MCF 10A (cell line): ENCODE measurements at regions of chrX and their contacts with region 1.

Region 1: GRCh38 chrX:16123222-16123786 is at the start of gene GRPR:
- DNase-seq: peak; percentile 88
- H3K4me3 Mint-ChIP-seq: no peak within 1 kb of the TSS
- H3K27ac Mint-ChIP-seq: no peak within 1 kb of the TSS
- H3K4me1 Mint-ChIP-seq: no peaks in the 10 kb centered on the region
- H3K27me3 Mint-ChIP-seq: peaks cover 69% of the 10 kb centered on the region
- CTCF ChIP-seq: peak; percentile 73
- total RNA-seq, gene GRPR: not detected in 2 replicates

Region 2: DNA sequence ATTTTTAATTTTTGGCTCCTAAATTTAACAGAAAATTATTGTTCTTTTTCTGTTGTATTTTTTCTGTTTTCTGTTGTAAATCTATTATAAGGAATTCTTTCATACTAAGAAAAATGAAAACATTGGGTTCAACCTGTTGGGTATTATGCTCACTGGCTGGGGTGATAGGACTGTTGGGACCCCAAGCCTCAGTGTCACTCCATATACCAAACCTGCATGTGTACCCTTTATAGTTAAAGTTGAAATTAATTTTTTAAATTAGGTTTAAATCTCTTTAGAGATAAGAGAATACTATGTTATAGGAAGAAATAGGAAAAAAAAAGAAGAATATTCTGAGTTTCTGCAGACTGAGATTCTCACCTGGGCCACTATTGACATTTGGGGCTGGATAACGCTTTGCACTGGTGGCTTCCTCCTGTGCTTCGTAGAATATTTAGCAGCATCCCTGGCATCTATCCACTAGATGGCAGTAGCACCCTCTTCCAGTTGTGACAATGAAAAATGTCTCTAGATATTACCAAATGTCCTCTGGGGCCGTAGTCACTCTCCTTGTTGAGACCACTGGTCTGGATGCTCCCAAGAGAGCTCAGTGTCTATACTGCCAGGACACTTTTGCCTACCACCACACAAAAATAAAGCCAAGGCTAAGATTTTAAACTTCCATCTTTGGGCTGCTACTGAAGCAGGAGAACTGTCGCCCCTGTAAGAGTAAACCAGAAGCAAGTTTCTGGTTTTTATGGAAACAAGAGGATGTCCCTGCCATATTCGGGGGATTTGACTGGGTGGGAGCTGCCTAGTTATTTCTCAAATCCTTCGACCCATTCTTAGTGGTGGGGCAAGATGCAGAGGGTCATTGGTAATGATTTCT is 436.3 kb before region 1 on chrX:
- CTCF ChIA-PET with region 1: no interaction called
- POLR2A ChIA-PET with region 1: no interaction called
- intact Hi-C with region 1: loop called (anchors 10 kb)
- DNase-seq: peak; percentile 78
- H3K4me3 Mint-ChIP-seq: no peak overlapping the region
- H3K27ac Mint-ChIP-seq: peak overlapping the region; percentile 39
- H3K4me1 Mint-ChIP-seq: no peaks in the 10 kb centered on the region
- H3K27me3 Mint-ChIP-seq: no peaks in the 10 kb centered on the region
- CTCF ChIP-seq: peak; percentile 71

Region 3: DNA sequence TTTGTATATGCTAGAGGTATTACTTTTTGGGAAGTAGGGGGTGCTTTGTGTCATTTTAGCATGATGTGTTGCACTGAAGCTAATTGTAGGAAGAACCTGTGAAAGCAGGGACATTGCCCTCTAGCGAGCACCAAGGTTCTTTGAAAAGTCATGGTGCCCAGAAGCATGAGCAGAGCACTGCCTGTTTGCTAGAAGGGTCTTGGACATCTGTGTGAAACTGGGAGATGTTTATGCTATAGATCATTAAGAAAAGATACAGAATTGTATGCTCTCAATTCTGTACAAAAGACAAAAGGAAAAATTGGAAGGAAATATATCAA is 14.8 kb after region 1 on chrX:
- CTCF ChIA-PET with region 1: interaction called, 15 read pairs
- POLR2A ChIA-PET with region 1: no interaction called
- intact Hi-C with region 1: no loop called
- DNase-seq: peak; percentile 12
- H3K4me3 Mint-ChIP-seq: no peak overlapping the region
- H3K27ac Mint-ChIP-seq: no peak overlapping the region
- H3K4me1 Mint-ChIP-seq: no peaks in the 10 kb centered on the region
- H3K27me3 Mint-ChIP-seq: peaks cover 78% of the 10 kb centered on the region
- CTCF ChIP-seq: no peak

Region 4: GRCh38 chrX:16436348-16437188 is 313.3 kb after region 1 on chrX:
- CTCF ChIA-PET with region 1: interaction called, 20 read pairs
- POLR2A ChIA-PET with region 1: no interaction called
- intact Hi-C with region 1: no loop called
- DNase-seq: peak; percentile 91
- H3K4me3 Mint-ChIP-seq: no peak overlapping the region
- H3K27ac Mint-ChIP-seq: no peak overlapping the region
- H3K4me1 Mint-ChIP-seq: no peaks in the 10 kb centered on the region
- H3K27me3 Mint-ChIP-seq: peaks cover 22% of the 10 kb centered on the region
- CTCF ChIP-seq: peak; percentile 69

Region 5: GRCh38 chrX:16664074-16664473 is 540.8 kb after region 1 on chrX:
- CTCF ChIA-PET with region 1: interaction called, 14 read pairs
- POLR2A ChIA-PET with region 1: no interaction called
- intact Hi-C with region 1: no loop called
- DNase-seq: no peak
- H3K4me3 Mint-ChIP-seq: no peak overlapping the region
- H3K27ac Mint-ChIP-seq: no peak overlapping the region
- H3K4me1 Mint-ChIP-seq: no peaks in the 10 kb centered on the region
- H3K27me3 Mint-ChIP-seq: peaks cover 50% of the 10 kb centered on the region
- CTCF ChIP-seq: no peak